ENCODE measurements at regions of chr6 and their contacts with region 1.

Region 1: DNA sequence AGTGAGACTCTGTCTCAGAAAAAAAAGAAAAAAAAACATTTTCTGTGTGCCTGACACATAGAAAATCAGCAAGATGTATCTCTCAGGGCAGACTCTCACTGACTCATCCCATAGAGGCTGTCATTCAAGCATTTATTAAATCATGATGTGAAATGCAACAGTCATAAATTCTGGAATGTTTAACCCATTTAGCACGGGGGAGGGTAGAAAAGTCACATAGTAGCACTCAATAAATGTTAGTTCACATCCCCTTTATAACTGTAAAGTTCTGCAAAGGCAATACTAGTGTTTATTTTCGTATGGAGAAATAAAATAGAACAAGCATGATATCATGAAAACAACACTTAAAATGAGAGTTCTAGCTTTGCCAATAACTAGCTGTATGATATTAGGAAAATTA is 15.5 kb upstream of the CARMIL1 start:
- DNase-seq: no peak
- ATAC-seq: no peak
- H3K4me3 ChIP-seq: no peak overlapping the region
- H3K4me3 Mint-ChIP-seq: no peak overlapping the region
- H3K27ac ChIP-seq: no peak overlapping the region
- H3K27ac Mint-ChIP-seq: no peak overlapping the region
- H3K4me1 ChIP-seq: no peaks in the 10 kb centered on the region
- H3K4me1 Mint-ChIP-seq: peaks cover 0 to 4% (median 3%) of the 10 kb centered on the region in 7 donors
- H3K27me3 ChIP-seq: no peaks in the 10 kb centered on the region
- H3K27me3 Mint-ChIP-seq: peaks cover 0 to 25% (median 3%) of the 10 kb centered on the region in 5 donors

Region 2: GRCh38 chr6:25324066-25324762 is 60.6 kb after region 1 on chr6:
- CTCF ChIA-PET with region 1: no interaction called
- POLR2A ChIA-PET with region 1: no interaction called
- intact Hi-C with region 1: no loop called
- DNase-seq: no peak
- ATAC-seq: no peak
- H3K4me3 ChIP-seq: no peak overlapping the region
- H3K4me3 Mint-ChIP-seq: no peak overlapping the region
- H3K27ac ChIP-seq: no peak overlapping the region
- H3K27ac Mint-ChIP-seq: no peak overlapping the region
- H3K4me1 ChIP-seq: no peaks in the 10 kb centered on the region
- H3K4me1 Mint-ChIP-seq: peaks cover 0 to 30% (median 15%) of the 10 kb centered on the region in 7 donors
- H3K27me3 ChIP-seq: no peaks in the 10 kb centered on the region
- H3K27me3 Mint-ChIP-seq: peaks cover 0 to 4% (median 0%) of the 10 kb centered on the region in 5 donors

Region 3: GRCh38 chr6:25499615-25500235 is 236.1 kb after region 1 on chr6:
- CTCF ChIA-PET with region 1: interaction called, 13 read pairs
- POLR2A ChIA-PET with region 1: no interaction called
- intact Hi-C with region 1: no loop called
- DNase-seq: no peak
- ATAC-seq: no peak
- H3K4me3 ChIP-seq: no peak overlapping the region
- H3K4me3 Mint-ChIP-seq: no peak overlapping the region
- H3K27ac ChIP-seq: no peak overlapping the region
- H3K27ac Mint-ChIP-seq: no peak overlapping the region
- H3K4me1 ChIP-seq: no peaks in the 10 kb centered on the region
- H3K4me1 Mint-ChIP-seq: peaks cover 0 to 2% (median 0%) of the 10 kb centered on the region in 7 donors
- H3K27me3 ChIP-seq: no peaks in the 10 kb centered on the region
- H3K27me3 Mint-ChIP-seq: no peaks in the 10 kb centered on the region

Region 4: DNA sequence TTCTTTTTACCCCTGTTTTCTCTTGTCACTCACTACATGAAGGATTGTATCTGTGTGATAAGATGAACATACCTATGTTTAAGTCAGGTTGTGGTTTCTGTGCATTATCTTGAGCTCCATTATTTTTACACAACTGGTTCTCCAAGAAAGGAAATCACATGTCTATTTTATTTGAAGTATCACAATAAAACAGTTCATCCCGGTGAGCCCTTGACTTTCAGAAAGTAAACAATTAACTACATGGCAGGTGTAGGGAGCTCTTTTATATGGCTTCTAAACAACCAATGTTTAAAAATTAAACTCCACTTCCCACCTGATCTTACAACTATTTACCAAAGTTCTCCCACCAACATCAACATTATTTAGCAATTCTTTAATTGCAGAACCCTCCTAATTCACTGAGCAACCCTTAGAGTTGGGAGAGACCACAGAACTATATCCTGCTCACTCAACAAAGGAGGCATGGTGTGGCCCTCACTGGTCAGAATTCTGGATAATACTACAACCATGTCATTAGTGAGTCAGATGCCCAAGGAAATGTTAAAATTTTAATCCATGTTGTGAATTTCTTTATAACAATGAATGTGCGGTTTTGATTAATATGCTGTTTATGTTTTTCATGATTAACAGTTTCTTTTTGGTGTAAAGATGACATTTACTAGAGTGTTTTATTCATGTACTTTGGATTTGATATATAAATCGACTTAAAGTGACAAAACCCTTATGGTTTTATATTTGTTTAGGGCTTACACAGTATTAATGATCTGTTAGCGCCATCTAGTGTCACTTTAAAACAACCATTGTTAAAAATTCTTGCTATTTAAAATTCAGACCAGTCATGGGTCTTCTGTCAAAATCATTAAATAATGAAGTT is 338.4 kb after region 1 on chr6:
- CTCF ChIA-PET with region 1: interaction called, 6 read pairs
- POLR2A ChIA-PET with region 1: no interaction called
- intact Hi-C with region 1: loop called (anchors 1 kb)
- DNase-seq: peak in 6 of 9 donors; percentile 3 to 48 (median 35)
- ATAC-seq: peak; percentile 64
- H3K4me3 ChIP-seq: no peak overlapping the region
- H3K4me3 Mint-ChIP-seq: no peak overlapping the region
- H3K27ac ChIP-seq: no peak overlapping the region
- H3K27ac Mint-ChIP-seq: peak overlapping the region in 2 of 9 donors; percentile 17 to 18
- H3K4me1 ChIP-seq: no peaks in the 10 kb centered on the region
- H3K4me1 Mint-ChIP-seq: peaks cover 0 to 19% (median 9%) of the 10 kb centered on the region in 7 donors
- H3K27me3 ChIP-seq: no peaks in the 10 kb centered on the region
- H3K27me3 Mint-ChIP-seq: no peaks in the 10 kb centered on the region

Measured in naive thymus-derived CD4-positive, alpha-beta T cell (primary cell).